Upper lobe of right lung (tissue), 1 donor: ENCODE measurements at regions of chr12 and their contacts with region 1.

Region 1: DNA sequence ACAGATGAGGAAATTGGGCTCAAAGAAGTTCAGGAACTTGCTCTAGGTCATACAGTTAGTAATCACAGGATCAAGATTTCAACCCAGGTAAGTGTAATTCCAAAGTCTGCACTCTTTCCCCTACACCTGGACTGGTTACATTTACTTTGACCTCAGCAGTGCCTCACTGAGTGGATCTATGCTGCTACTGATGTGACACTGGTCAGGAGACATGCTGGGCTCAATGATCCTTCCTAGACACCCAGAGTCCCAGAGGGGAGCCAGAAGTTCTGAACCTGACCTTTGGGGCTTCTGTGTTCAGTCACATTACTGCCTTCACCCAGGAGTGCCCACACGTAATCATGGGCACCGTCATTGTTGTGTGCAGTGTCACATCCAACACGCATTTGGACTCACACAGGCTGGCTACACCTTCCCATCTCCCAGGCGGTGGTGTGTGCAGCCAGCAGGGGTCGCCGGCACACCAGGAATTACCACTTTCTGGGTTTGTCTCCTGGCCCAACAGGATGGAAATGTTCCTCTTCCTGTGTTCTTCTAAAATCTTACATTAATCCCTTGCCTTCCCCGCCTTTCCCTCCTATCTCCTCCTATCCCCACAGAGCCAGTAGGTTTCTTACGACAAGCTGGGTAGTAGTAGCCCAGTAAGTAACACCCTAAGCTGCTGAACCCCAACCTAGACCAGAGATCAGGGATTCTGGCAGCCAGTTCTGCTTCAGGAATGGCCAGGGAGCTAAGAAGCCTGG is 25.6 kb downstream of the CALCOCO1 start:
- DNase-seq: peak; percentile 91
- ATAC-seq: peak; percentile 96
- H3K4me3 ChIP-seq: no peak overlapping the region
- H3K27ac ChIP-seq: no peak overlapping the region
- H3K4me1 ChIP-seq: peaks cover 3% of the 10 kb centered on the region
- H3K27me3 ChIP-seq: peaks cover 68% of the 10 kb centered on the region
- CTCF ChIP-seq: peak; percentile 93

Region 2: GRCh38 chr12:53492830-53493611 is 208.7 kb before region 1 on chr12:
- intact Hi-C with region 1: no loop called
- DNase-seq: peak; percentile 96
- ATAC-seq: peak; percentile 97
- H3K4me3 ChIP-seq: peak overlapping the region; percentile 62
- H3K27ac ChIP-seq: peak overlapping the region; percentile 81
- H3K4me1 ChIP-seq: peaks cover 43% of the 10 kb centered on the region
- H3K27me3 ChIP-seq: no peaks in the 10 kb centered on the region
- CTCF ChIP-seq: no peak

Region 3: GRCh38 chr12:53746592-53747092 is 45.0 kb after region 1 on chr12:
- intact Hi-C with region 1: loop called (anchors 5 kb)
- DNase-seq: peak; percentile 94
- ATAC-seq: peak; percentile 95
- H3K4me3 ChIP-seq: no peak overlapping the region
- H3K27ac ChIP-seq: no peak overlapping the region
- H3K4me1 ChIP-seq: peaks cover 14% of the 10 kb centered on the region
- H3K27me3 ChIP-seq: peaks cover 40% of the 10 kb centered on the region
- CTCF ChIP-seq: peak; percentile 100